Posterior vena cava (tissue), 2 donors: ENCODE measurements at regions of chr19 and their contacts with region 1.

Region 1: GRCh38 chr19:984165-984967 is at the start of gene WDR18:
- DNase-seq: peak; percentile 98
- total RNA-seq, gene WDR18: 13.4 to 17.2 TPM

Region 2: DNA sequence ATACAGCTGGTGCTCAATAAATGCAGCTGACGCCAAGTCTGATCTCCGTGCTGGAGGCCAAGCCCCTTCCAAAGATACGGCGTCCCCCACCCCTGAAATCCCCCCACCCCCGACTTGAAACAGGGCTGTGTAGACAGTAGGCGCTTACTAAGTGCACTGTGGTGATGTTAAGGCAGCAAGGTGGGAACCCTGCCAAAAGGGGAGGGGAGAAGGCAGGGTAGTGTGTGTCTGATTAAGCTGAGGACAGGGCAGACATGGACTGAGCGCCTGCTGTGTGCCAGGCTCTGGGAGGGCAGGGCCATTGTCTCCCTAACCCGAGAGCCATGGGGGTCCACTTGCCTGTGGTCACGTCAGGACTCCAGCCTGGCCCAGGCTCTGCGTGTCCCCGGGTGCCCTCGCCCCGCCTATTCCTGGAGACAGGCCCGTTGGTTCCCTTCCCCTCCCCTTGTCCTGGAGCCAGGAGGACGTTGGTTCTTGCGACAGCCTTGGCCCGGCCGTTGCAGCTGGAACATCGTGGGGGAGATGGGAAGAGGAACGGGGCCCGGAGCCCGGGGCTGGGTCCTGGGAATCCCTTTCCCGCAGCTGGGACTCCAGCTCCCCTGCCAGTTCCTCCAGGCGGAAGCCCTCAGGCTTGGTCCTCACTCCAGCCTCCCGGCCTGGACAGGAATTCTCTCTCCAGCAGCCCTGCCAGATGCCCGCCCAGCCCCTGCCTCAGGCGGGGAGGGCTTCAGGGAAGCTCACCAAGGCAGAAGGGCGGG is 134.0 kb before region 1 on chr19:
- intact Hi-C with region 1: loop called in 1 of 2 experiments (anchors 10 kb)
- DNase-seq: peak; percentile 98

Region 3: GRCh38 chr19:861763-862580 is 122.4 kb before region 1 on chr19:
- intact Hi-C with region 1: loop called (anchors 2 to 10 kb)
- DNase-seq: no peak

Region 4: DNA sequence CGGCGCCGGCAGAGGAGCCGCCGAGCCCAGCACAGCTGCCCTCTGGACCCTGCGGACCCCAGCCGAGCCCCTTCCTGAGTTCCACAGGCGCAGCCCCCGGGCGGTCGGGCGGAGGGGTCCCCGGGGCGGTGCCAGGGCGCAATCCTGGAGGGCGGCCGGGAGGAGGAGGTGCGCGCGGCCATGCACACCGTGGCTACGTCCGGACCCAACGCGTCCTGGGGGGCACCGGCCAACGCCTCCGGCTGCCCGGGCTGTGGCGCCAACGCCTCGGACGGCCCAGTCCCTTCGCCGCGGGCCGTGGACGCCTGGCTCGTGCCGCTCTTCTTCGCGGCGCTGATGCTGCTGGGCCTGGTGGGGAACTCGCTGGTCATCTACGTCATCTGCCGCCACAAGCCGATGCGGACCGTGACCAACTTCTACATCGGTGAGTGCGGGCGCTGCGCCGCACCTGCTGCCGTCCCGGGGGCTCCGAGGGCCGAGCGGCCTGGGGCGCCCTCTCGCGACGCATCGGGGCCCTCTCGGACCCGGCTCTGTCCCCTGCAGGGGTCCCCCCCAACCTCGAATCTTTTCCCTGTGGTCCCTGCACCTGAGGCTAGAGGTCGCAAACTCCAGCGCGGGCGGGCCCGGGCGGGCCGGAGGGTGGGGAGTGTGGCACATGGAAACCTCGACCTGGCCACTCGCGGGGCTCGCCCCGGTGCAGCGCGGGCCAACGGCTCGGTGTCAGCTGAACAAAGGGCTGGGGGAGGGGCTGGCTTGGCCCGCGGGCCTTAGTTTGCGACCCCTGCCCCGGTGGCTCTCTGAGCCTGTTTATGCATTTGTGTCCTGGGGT is 66.8 kb before region 1 on chr19 and contains the start of gene KISS1R:
- intact Hi-C with region 1: loop called (anchors 2 kb)
- DNase-seq: no peak
- total RNA-seq, gene KISS1R: not detected

Region 5: GRCh38 chr19:924943-925525 is 59.3 kb before region 1 on chr19:
- intact Hi-C with region 1: loop called (anchors 2 kb)
- DNase-seq: no peak